Astrocyte of the cerebellum (primary cell): ENCODE measurements at regions of chr11 and their contacts with region 1.

Region 1: DNA sequence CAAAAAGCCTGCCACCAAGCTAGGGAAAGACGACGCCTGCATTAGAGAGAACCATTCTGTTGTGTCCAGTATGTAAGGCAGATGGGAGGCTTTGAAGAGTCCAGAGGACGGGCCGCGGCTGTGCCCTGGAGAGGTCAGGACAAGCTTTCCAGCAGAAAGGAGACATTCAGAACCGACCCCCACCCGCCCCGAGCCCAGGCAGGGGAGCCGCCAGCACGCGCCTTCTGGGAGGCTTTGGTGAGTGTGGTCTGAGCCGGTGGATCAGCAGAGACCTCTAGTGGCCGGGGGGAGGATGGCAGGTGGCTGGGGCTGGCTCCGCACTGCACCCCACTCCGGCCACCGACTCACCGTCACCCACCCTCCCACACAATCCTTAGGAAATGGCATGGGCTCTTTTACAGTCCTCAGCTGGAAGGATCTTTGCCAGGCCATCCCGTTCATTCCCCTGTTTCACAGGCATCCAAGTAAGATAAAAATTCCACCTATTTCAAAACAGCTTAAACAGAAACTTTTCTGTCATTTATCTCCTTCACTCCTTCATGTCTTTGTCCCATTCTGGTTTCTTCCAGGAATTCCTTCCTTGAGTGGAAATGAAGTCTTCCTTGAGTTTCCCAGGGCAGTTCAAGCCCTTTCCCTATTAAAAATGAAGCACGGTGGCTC is 91.2 kb downstream of the FEZ1 start:
- DNase-seq: no peak
- H3K4me3 ChIP-seq: no peak overlapping the region
- CTCF ChIP-seq: peak; percentile 98

Region 2: GRCh38 chr11:124953753-124954589 is 450.9 kb before region 1 on chr11 and contains the start of gene CCDC15:
- in situ Hi-C with region 1: loop called (anchors 25 kb)
- DNase-seq: peak; percentile 92
- H3K4me3 ChIP-seq: peak within 1 kb of the TSS; percentile 71
- CTCF ChIP-seq: no peak

Region 3: GRCh38 chr11:125091247-125091876 is 313.5 kb before region 1 on chr11:
- in situ Hi-C with region 1: loop called (anchors 10 kb)
- DNase-seq: peak; percentile 70
- H3K4me3 ChIP-seq: no peak overlapping the region
- CTCF ChIP-seq: peak; percentile 69

Region 4: DNA sequence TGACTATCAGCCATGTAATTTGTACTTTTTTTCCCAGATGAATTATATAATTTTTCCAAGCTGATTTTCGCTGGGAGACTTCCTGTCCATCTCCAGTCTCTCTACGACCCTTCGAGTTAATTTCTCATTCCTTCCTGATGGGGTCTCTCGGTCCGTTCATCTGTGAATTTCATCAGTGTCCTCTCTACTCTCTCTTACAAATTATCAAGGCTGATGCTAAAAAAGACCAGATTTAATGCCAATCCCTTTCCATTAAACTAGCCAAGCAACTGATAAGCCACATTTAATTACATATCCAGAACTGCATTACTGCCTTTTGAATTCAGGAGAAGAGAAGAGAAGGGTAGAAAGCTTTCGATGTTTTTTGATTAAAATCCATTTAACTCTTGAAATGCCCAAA is 566.7 kb after region 1 on chr11:
- in situ Hi-C with region 1: no loop called
- DNase-seq: no peak
- H3K4me3 ChIP-seq: no peak overlapping the region
- CTCF ChIP-seq: no peak